ENCODE measurements at regions of chr5 and their contacts with region 1.

Region 1: DNA sequence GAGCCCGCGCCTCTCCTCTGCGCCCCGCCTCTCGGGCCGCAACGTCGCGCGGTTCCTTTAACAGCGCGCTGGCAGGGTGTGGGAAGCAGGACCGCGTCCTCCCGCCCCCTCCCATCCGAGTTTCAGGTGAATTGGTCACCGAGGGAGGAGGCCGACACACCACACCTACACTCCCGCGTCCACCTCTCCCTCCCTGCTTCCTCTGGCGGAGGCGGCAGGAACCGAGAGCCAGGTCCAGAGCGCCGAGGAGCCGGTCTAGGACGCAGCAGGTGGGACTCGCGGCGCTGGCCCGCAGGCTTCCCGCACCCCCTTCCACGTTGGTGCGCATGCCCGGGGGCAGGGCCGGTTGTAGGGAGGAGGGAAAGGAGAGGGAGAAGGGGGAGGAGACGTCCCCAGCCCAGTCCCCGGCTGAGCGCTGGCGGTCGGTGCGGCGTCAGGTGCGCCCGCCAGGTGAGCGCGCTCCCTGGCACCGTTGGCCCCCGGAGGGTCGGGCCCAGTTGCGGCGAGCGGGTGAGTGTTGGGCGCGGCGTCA is at the start of gene OCLN:
- DNase-seq: peak; percentile 40 to 90 (median 79)
- ATAC-seq: peak; percentile 88
- H3K4me3 ChIP-seq: peak within 1 kb of the TSS; percentile 58 to 71
- H3K27ac ChIP-seq: peak within 1 kb of the TSS; percentile 89 to 90
- H3K4me1 ChIP-seq: peaks cover 3 to 33% of the 10 kb centered on the region in 2 donors
- H3K27me3 ChIP-seq: peaks cover 15 to 46% of the 10 kb centered on the region in 2 donors
- CTCF ChIP-seq: no peak
- polyA plus RNA-seq, gene OCLN: 38.6 to 51.8 (median 46.4) TPM

Region 2: DNA sequence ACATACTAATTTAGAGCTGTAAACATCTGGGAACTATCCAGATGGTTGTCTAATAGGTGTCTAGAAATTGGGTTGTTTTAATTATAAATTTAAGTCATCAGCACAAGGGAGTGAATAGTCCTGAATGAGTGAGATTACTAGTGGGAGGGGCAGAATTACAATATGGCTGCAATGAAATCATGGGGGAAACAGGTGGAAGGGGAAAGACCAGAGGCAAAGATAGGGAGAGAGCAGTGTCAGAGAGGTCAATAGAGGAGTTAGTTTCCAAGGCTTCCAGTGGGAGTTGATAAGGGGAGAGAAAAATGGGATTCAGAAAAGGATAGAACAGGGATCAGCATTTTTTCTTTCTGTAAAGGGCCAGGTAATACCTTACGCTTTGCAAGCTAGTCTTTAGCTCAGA is 132.0 kb before region 1 on chr5:
- intact Hi-C with region 1: no loop called
- DNase-seq: no peak
- ATAC-seq: no peak
- H3K4me3 ChIP-seq: no peak overlapping the region
- H3K27ac ChIP-seq: no peak overlapping the region
- H3K4me1 ChIP-seq: peaks cover 0 to 6% of the 10 kb centered on the region in 2 donors
- H3K27me3 ChIP-seq: no peaks in the 10 kb centered on the region
- CTCF ChIP-seq: no peak

Region 3: GRCh38 chr5:69414885-69415583 is 77.4 kb before region 1 on chr5 and contains the start of gene MARVELD2:
- intact Hi-C with region 1: loop called in 1 of 2 experiments (anchors 10 kb)
- DNase-seq: peak; percentile 46 to 96 (median 88)
- ATAC-seq: peak; percentile 96
- H3K4me3 ChIP-seq: peak within 1 kb of the TSS; percentile 50 to 62
- H3K27ac ChIP-seq: peak within 1 kb of the TSS; percentile 81 to 86
- H3K4me1 ChIP-seq: peaks cover 0 to 5% of the 10 kb centered on the region in 2 donors
- H3K27me3 ChIP-seq: peaks cover 0 to 9% of the 10 kb centered on the region in 2 donors
- CTCF ChIP-seq: peak; percentile 33 to 38
- polyA plus RNA-seq, gene MARVELD2: 16.1 to 23.9 (median 21.7) TPM

Measured in left lung (tissue), 14 donors.